Activated CD4-positive, alpha-beta T cell treated with anti-CD3 and anti-CD28 coated beads, Interleukin-2, amount 10 ng/mL, durations not matched to agents 24 days and 14 days (primary cell): ENCODE measurements at regions of chr1 and their contacts with region 1.

Region 1: DNA sequence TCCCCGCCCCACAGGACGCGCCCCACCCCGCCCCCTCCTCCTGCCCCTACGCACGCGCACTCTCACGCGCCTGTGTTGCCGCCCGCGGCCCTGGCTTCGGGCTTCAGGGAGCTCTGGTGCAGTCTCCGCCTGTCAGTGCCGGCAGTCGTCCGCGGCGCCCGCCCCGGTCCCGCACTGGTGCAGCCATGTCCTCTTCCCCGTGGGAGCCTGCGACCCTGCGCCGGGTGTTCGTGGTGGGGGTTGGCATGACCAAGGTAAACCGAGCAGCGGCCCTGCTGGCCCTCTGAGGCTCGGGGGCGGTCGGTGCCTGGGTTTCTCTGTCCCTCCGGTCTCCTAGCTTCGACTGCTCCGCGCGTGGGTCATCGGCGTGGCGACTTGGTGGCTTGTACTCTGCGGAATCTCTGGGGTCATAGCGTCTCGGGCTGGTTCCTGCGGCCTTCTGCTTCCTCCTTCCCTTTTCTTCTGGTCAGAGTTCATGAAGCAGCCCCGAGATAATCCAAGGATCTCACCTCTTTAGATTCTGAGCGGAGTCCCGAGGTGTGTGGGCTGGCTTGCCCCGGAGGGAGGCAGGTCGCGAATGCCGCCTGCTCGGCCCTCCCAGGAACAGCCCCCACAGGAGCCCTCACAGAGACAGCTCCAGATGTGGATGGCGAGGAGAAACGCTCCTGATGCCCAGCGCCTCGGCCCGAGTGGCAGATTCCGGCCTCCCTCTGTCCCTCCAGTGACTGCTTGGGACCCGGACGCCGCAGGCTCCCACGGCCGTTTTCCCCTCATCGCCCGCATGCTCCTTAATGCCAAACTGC is at the start of gene SCP2:
- DNase-seq: peak; percentile 95
- H3K4me3 Mint-ChIP-seq: peak within 1 kb of the TSS; percentile 88
- H3K27ac Mint-ChIP-seq: peak within 1 kb of the TSS; percentile 74
- H3K4me1 Mint-ChIP-seq: peaks cover 17% of the 10 kb centered on the region
- H3K27me3 Mint-ChIP-seq: peaks cover 6% of the 10 kb centered on the region
- total RNA-seq, gene SCP2: 60.3 and 61.7 TPM in 2 replicates

Region 2: GRCh38 chr1:52970149-52970548 is 42.7 kb after region 1 on chr1:
- intact Hi-C with region 1: no loop called
- DNase-seq: no peak
- H3K4me3 Mint-ChIP-seq: no peak overlapping the region
- H3K27ac Mint-ChIP-seq: no peak overlapping the region
- H3K4me1 Mint-ChIP-seq: no peaks in the 10 kb centered on the region
- H3K27me3 Mint-ChIP-seq: no peaks in the 10 kb centered on the region

Region 3: GRCh38 chr1:53014791-53015507 is 87.5 kb after region 1 on chr1:
- intact Hi-C with region 1: loop called (anchors 2 kb)
- DNase-seq: peak; percentile 94
- H3K4me3 Mint-ChIP-seq: peak overlapping the region; percentile 95
- H3K27ac Mint-ChIP-seq: peak overlapping the region; percentile 65
- H3K4me1 Mint-ChIP-seq: peaks cover 24% of the 10 kb centered on the region
- H3K27me3 Mint-ChIP-seq: no peaks in the 10 kb centered on the region